Heart left ventricle (tissue), 16 donors: ENCODE measurements at regions of chr1 and their contacts with region 1.

Region 1: DNA sequence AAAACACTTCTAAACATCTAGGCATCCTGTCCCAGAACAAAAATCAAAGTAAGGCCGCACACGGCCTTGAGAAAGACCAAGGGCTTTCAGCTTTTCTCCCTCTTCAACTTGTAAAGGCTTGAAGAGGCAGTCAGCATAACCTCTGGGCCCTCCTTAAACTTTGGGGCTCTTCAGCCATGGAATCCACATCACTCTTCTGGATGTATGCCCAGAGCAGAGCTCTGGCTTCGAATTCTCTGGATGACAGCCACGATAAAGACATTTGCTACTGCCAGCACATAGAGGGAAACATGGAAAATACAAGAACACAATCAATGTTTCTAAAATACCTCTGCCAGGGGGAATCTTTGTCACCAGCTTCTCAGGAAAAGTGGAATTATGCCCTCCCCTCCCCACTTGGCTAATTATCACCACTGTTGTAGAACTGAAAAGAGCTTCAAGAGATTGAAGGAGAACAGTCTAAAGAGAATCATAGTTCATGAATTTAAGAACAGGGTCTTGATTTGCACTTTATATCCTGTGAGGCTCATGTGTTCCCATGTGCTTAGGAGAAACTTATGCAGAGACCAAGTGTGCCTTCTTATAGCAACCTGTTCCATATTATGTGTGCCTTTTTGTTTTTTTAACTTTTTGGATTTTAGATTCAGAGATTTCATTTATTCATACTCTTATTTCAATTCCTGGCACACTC is 39.0 kb upstream of the DPT start:
- DNase-seq: peak in 4 of 5 donors; percentile 44 to 61 (median 57)
- ATAC-seq: peak; percentile 77 to 95 (median 90)
- H3K4me3 ChIP-seq: no peak overlapping the region
- H3K27ac ChIP-seq: peak overlapping the region in 10 of 12 donors; percentile 28 to 63 (median 46)
- H3K4me1 ChIP-seq: peaks cover 0 to 21% (median 8%) of the 10 kb centered on the region in 12 donors
- H3K27me3 ChIP-seq: no peaks in the 10 kb centered on the region
- CTCF ChIP-seq: no peak
- POLR2A ChIP-seq: no peak

Region 2: DNA sequence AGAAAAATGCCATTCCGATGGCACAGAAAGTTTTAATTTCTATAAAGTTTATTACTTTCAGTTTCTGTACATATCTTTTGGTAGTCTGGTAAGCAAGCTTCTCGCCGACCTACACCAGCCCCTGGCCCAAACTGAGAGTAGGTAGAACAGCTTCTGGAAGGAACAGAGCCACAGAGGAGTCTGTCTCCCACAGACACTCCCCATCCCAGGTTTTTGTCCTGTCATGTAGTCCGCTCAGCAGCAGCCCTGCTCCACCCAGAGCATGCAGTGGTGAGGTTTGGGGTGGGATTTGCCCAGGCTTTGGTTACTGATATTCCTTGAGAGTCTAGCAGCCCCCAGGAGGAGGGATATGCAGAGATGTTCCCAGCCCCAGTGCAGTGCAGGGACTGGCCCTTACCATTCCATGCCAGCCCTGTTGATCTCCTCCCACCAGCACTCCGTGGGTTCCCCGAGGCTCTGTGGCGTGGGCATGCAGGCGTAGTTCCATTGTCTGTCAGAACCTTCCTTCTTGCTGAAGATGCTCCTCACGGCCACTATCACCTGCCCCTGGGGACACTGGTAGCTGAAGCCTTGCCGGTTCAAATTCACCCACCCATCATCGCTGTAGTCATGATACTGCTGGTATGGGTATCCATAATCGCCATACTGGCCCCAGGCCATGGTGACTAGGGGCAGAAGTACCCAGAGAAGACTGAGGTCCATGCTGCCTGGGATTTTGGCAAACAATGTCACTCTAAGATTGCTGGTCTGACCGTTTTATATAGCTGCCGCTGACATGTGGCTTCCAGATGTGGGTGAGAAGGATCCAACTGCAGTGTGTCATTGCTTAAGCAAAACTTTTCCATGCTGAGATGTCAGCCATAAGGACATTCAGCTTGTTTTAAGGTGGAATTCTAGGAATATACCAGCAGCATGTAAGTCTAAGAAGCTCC is 39.3 kb before region 1 on chr1 and contains the start of gene DPT:
- intact Hi-C with region 1: loop called in 2 of 10 experiments (anchors 5 kb)
- DNase-seq: peak in 4 of 5 donors; percentile 35 to 64 (median 56)
- ATAC-seq: peak; percentile 68 to 81 (median 76)
- H3K4me3 ChIP-seq: peak within 1 kb of the TSS in 11 of 12 donors; percentile 6 to 64 (median 50)
- H3K27ac ChIP-seq: peak within 1 kb of the TSS in 10 of 12 donors; percentile 24 to 79 (median 58)
- H3K4me1 ChIP-seq: peaks cover 0 to 3% (median 0%) of the 10 kb centered on the region in 12 donors
- H3K27me3 ChIP-seq: no peaks in the 10 kb centered on the region
- CTCF ChIP-seq: no peak
- POLR2A ChIP-seq: no peak
- total RNA-seq, gene DPT: 20.5 to 74.1 (median 35.0) TPM

Region 3: GRCh38 chr1:168734946-168735345 is 33.1 kb before region 1 on chr1:
- intact Hi-C with region 1: loop called in 1 of 10 experiments (anchors 5 kb)
- DNase-seq: no peak
- ATAC-seq: peak in 1 of 4 donors; percentile 41
- H3K4me3 ChIP-seq: no peak overlapping the region
- H3K27ac ChIP-seq: peak overlapping the region in 1 of 12 donors; percentile 6
- H3K4me1 ChIP-seq: peaks cover 0 to 23% (median 8%) of the 10 kb centered on the region in 12 donors
- H3K27me3 ChIP-seq: no peaks in the 10 kb centered on the region
- CTCF ChIP-seq: peak in 5 of 12 donors; percentile 9 to 35 (median 16)
- POLR2A ChIP-seq: no peak